Lower leg skin (tissue), 4 donors: ENCODE measurements at regions of chr1 and their contacts with region 1.

Region 1: GRCh38 chr1:214380396-214380795 is 99.4 kb downstream of the SMYD2 start:
- DNase-seq: no peak
- H3K4me3 ChIP-seq: no peak overlapping the region
- CTCF ChIP-seq: no peak
- POLR2A ChIP-seq: no peak

Region 2: DNA sequence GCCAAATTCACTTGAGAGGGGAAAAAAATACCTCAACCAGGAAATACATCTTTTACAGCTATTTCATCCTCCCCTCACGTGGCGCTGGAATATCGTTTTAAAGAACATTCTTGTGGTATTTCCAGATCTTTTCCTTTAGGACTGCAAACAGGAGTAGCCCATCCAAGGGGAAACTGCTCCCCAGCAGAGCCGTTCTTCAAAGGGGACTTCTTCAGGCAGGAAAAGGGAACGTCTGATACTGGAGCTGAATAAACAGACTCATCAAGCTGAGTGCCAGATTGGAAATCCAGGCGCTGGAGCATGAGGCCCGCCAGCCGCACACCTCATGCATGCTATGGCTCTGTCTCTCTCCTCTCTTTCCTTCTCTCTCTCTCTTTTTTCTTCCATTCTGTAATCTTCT is 426.6 kb before region 1 on chr1:
- intact Hi-C with region 1: no loop called
- DNase-seq: no peak
- H3K4me3 ChIP-seq: no peak overlapping the region
- CTCF ChIP-seq: no peak
- POLR2A ChIP-seq: no peak

Region 3: GRCh38 chr1:215497528-215497927 is 1117.1 kb after region 1 on chr1:
- intact Hi-C with region 1: loop called (anchors 5 kb)
- DNase-seq: no peak
- H3K4me3 ChIP-seq: no peak overlapping the region
- CTCF ChIP-seq: no peak
- POLR2A ChIP-seq: no peak